MCF 10A (cell line): ENCODE measurements at regions of chr1 and their contacts with region 1.

Region 1: GRCh38 chr1:63691701-63692425 is 82.0 kb upstream of the ROR1 start:
- DNase-seq: peak; percentile 88
- H3K4me3 Mint-ChIP-seq: no peak overlapping the region
- H3K27ac Mint-ChIP-seq: peak overlapping the region; percentile 28
- H3K4me1 Mint-ChIP-seq: peaks cover 17% of the 10 kb centered on the region
- H3K27me3 Mint-ChIP-seq: no peaks in the 10 kb centered on the region
- CTCF ChIP-seq: peak; percentile 63

Region 2: DNA sequence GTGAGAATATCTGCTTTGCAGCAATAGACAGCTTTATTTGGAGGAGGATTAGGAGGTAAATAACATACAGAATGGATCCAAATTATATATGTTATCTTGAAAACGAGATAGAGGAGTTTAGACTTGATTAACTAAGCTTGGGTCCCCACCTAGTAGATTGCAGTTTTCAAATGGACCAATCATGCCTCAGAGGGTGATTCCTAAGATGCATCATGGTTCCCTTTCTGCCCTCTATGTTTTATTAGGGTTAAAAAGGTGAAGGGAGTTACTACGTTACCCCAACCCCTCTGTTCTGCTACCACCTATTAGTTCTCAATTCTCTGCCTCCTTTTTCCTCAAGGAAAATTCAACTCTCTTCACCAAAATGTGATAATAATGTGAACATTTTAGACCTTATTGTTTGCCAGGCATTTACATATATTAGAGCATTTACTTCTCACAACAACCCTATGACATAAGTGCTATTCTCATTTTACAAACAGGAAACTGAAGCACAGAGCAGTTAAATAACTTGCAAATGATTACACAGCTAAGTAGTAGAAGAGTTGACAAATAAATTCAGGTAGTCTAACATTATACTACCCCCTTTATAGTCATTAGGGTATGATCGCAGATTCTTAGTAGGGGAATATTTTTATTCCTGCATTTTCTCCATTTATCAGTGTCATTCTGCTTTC is 122.1 kb before region 1 on chr1:
- CTCF ChIA-PET with region 1: no interaction called
- POLR2A ChIA-PET with region 1: no interaction called
- intact Hi-C with region 1: no loop called
- DNase-seq: no peak
- H3K4me3 Mint-ChIP-seq: no peak overlapping the region
- H3K27ac Mint-ChIP-seq: no peak overlapping the region
- H3K4me1 Mint-ChIP-seq: no peaks in the 10 kb centered on the region
- H3K27me3 Mint-ChIP-seq: no peaks in the 10 kb centered on the region
- CTCF ChIP-seq: no peak

Region 3: DNA sequence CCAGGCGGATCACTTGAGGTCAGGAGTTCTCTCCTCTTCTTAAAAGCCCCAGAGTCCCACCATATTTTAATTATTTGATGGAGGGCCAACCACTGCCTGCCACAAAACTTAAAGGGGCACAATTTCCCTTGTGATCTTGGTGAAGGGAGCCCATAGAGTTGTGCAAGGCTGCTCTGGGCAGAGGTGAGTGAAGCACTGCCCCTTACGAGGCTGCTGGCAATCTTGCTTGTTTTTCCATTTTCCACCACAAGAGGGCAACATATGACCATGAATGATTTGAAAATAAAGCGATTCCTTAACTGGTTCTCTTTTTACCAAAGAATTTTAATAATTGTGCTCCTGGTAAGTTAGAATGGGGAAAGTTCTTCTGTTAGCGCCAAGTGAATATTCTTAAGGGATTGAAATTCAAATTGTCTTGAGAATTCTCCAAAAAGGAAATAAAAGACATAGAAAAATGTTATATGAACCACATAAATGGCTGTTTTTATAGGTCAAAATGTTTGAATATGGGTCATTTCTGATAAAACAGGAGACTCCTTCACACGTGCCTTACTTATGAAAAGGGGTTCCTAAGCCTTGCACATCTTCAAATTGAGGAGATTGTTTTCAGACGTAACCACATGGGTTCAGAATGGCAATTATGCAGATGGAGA is 76.0 kb before region 1 on chr1:
- CTCF ChIA-PET with region 1: interaction called, 15 read pairs
- POLR2A ChIA-PET with region 1: no interaction called
- intact Hi-C with region 1: loop called (anchors 2 kb)
- DNase-seq: peak; percentile 82
- H3K4me3 Mint-ChIP-seq: no peak overlapping the region
- H3K27ac Mint-ChIP-seq: no peak overlapping the region
- H3K4me1 Mint-ChIP-seq: peaks cover 24% of the 10 kb centered on the region
- H3K27me3 Mint-ChIP-seq: no peaks in the 10 kb centered on the region
- CTCF ChIP-seq: peak; percentile 72

Region 4: GRCh38 chr1:63662056-63662836 is 29.6 kb before region 1 on chr1:
- CTCF ChIA-PET with region 1: interaction called, 23 read pairs
- POLR2A ChIA-PET with region 1: interaction called, 8 read pairs
- intact Hi-C with region 1: no loop called
- DNase-seq: peak; percentile 97
- H3K4me3 Mint-ChIP-seq: peak overlapping the region; percentile 58
- H3K27ac Mint-ChIP-seq: peak overlapping the region; percentile 97
- H3K4me1 Mint-ChIP-seq: peaks cover 39% of the 10 kb centered on the region
- H3K27me3 Mint-ChIP-seq: no peaks in the 10 kb centered on the region
- CTCF ChIP-seq: no peak

Region 5: GRCh38 chr1:63917571-63918417 is 225.9 kb after region 1 on chr1:
- CTCF ChIA-PET with region 1: interaction called, 4 read pairs
- POLR2A ChIA-PET with region 1: no interaction called
- intact Hi-C with region 1: loop called (anchors 5 kb)
- DNase-seq: peak; percentile 46
- H3K4me3 Mint-ChIP-seq: no peak overlapping the region
- H3K27ac Mint-ChIP-seq: no peak overlapping the region
- H3K4me1 Mint-ChIP-seq: peaks cover 16% of the 10 kb centered on the region
- H3K27me3 Mint-ChIP-seq: no peaks in the 10 kb centered on the region
- CTCF ChIP-seq: peak; percentile 12

Region 6: GRCh38 chr1:63991685-63992084 is 299.8 kb after region 1 on chr1:
- CTCF ChIA-PET with region 1: no interaction called
- POLR2A ChIA-PET with region 1: no interaction called
- intact Hi-C with region 1: no loop called
- DNase-seq: no peak
- H3K4me3 Mint-ChIP-seq: no peak overlapping the region
- H3K27ac Mint-ChIP-seq: no peak overlapping the region
- H3K4me1 Mint-ChIP-seq: no peaks in the 10 kb centered on the region
- H3K27me3 Mint-ChIP-seq: no peaks in the 10 kb centered on the region
- CTCF ChIP-seq: no peak

Region 7: DNA sequence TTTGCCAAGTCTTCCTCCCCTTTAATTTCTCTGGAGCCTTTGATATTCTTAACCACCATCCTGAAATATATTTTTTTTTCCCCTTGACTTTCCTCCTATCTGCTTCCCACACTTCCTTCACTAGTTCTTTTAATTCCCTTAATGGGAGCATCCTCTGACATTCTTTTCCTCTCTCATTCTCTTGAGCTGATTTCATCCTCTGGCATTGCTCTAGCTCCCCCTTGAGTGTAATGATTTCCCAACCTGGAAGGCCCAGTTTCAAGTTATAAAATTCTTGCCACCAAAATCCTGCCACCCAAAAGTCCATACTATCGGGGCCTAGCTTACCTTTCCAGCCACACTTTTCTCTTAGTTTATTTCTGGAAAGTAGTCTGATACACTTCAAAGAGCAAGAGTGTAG is 472.1 kb after region 1 on chr1:
- CTCF ChIA-PET with region 1: interaction called, 35 read pairs
- POLR2A ChIA-PET with region 1: no interaction called
- intact Hi-C with region 1: loop called (anchors 1 kb)
- DNase-seq: peak; percentile 30
- H3K4me3 Mint-ChIP-seq: no peak overlapping the region
- H3K27ac Mint-ChIP-seq: no peak overlapping the region
- H3K4me1 Mint-ChIP-seq: no peaks in the 10 kb centered on the region
- H3K27me3 Mint-ChIP-seq: no peaks in the 10 kb centered on the region
- CTCF ChIP-seq: peak; percentile 28